Gastrocnemius medialis (tissue), 4 donors: ENCODE measurements at regions of chr15 and their contacts with region 1.

Region 1: DNA sequence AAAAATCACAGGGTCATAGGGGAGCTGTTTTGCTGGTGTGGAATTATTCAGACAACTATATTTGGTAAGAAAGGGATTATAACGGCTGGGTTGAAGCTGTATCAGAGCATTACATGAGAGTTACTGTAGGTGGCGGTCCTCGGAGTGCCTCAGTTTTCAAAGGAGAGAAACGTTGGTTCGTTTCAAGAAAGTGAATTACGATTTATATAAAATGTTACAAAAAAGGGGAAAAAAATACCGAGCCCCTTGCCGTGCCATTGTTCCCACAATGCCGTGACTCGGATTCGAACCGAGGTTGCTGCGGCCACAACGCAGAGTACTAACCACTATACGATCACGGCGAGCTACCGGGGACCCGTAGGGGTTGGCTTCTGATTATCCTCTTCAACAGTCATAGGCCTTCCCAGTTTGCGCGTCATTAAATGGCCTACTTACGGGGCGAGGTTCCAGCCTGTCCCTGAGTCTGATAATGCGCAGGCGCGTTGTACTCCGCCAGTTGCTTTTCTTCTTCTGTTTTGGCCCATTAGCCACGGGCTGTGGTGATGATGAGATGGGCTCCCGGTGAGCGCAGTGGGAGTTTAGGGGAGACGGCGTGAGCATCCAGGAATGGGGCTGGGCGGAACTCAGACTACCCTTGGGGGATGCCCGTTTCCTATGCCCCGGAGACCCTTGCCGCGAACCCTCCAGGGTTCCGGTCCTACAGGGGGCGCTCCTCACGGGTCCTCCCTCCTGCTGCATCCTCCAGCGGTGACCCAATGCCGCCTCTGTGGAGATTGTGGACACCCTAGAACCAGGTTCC is 10.8 kb upstream of the SHF start:
- DNase-seq: peak; percentile 92 to 96
- ATAC-seq: peak; percentile 80 to 82
- H3K4me3 ChIP-seq: peak overlapping the region; percentile 74 to 99 (median 93)
- H3K27ac ChIP-seq: peak overlapping the region; percentile 95 to 100 (median 99)
- H3K4me1 ChIP-seq: peaks cover 0 to 3% of the 10 kb centered on the region in 2 donors
- H3K27me3 ChIP-seq: no peaks in the 10 kb centered on the region
- CTCF ChIP-seq: peak; percentile 62 to 70 (median 64)
- POLR2A ChIP-seq: peak; percentile 85 to 87

Region 2: DNA sequence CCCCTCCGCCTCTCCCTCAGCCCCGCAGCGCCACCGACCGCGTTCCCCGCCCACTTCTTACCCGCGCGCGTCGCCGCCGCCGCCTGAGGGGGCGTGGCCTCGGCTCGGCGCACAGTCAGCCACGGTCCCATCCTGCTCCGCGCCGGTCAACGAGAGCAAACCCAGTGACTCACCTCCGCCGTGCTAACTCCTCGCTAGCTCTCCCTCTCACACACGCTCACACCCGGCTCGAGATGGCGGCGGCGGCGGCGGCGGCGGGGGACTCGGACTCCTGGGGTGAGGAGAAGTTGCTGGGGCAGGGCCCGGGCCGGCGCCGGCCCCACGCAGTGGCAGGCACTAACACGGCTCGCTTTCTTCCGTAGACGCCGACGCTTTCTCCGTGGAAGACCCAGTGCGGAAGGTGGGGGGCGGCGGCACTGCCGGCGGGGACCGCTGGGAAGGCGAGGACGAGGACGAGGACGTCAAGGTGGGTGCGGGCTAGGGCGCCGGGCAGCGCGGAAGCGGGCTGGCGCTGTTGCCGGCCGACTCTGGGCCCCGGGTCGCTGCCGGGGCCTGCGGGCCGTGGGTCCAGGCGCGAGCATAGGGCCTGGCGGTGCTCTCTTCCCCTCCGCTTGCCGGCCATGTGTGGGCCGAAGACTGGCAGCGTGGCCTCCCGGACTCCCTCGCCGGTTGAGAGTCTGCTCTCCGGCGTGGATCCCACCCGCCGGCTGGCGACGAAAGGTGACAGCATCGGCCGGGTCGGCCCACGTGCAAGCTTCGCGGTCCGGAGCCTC is 661.4 kb before region 1 on chr15 and contains the start of gene EIF3J:
- in situ Hi-C with region 1: no loop called
- intact Hi-C with region 1: loop called (anchors 5 kb)
- DNase-seq: peak; percentile 94 to 96
- ATAC-seq: peak; percentile 88 to 90
- H3K4me3 ChIP-seq: peak within 1 kb of the TSS; percentile 67 to 99 (median 89)
- H3K27ac ChIP-seq: peak within 1 kb of the TSS; percentile 90 to 99 (median 94)
- H3K4me1 ChIP-seq: peaks cover 38 to 48% of the 10 kb centered on the region in 2 donors
- H3K27me3 ChIP-seq: no peaks in the 10 kb centered on the region
- CTCF ChIP-seq: no peak
- POLR2A ChIP-seq: peak; percentile 84 to 97
- total RNA-seq, gene EIF3J: 79.2 to 122 (median 103) TPM

Region 3: GRCh38 chr15:45166834-45167630 is 31.5 kb before region 1 on chr15:
- in situ Hi-C with region 1: no loop called
- intact Hi-C with region 1: loop called (anchors 1 kb)
- DNase-seq: peak; percentile 64 to 78
- ATAC-seq: peak; percentile 78 to 82
- H3K4me3 ChIP-seq: peak overlapping the region; percentile 66 to 77 (median 75)
- H3K27ac ChIP-seq: peak overlapping the region; percentile 84 to 92 (median 89)
- H3K4me1 ChIP-seq: peaks cover 0 to 4% of the 10 kb centered on the region in 2 donors
- H3K27me3 ChIP-seq: no peaks in the 10 kb centered on the region
- CTCF ChIP-seq: peak; percentile 26 to 59 (median 51)
- POLR2A ChIP-seq: peak; percentile 14 to 20

Region 4: GRCh38 chr15:45333550-45333949 is 135.0 kb after region 1 on chr15:
- in situ Hi-C with region 1: no loop called
- intact Hi-C with region 1: no loop called
- DNase-seq: peak; percentile 6 to 29
- ATAC-seq: peak; percentile 45 to 55
- H3K4me3 ChIP-seq: no peak overlapping the region
- H3K27ac ChIP-seq: no peak overlapping the region
- H3K4me1 ChIP-seq: no peaks in the 10 kb centered on the region
- H3K27me3 ChIP-seq: no peaks in the 10 kb centered on the region
- CTCF ChIP-seq: no peak
- POLR2A ChIP-seq: no peak

Region 5: DNA sequence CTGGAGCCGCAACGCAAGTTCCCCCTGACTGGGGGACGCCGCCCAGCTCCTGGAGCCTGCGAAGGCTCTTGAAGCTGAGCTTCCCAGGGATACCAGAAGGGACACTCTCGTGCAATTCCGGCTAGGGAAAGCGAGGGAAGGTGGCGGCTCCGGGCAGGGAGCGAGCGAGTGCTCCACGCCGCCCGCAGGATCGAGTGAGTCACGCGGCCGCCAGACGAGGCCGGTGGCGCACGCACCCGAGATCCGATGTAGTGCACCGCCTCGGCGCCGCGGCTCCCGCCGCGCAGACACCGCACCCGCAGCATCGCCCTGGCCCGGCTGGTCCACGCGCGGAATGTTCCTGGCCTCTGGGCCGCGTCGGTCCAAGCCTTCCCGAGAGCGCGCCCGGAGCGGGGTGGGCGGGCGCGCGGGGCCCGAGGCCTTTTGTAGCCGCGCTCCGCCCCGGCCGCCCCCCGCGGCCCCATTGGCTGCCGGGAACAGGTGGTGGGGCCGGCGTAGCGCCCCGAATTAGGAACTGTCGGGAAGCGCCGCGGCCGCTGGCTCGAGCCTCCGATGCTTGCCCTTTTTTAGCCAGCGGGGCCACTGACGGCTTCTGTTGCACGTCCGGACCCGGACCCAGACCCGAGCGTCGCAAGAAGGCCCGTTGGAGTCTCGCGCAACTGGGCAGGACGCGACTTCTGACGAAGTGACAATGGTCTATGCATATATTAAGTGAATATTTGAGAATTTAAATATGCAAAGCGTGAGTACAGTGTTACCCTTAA is 179.8 kb after region 1 on chr15 and contains the start of gene GATM:
- in situ Hi-C with region 1: loop called in 1 of 4 experiments (anchors 10 kb)
- intact Hi-C with region 1: loop called (anchors 1 kb)
- DNase-seq: peak; percentile 71
- ATAC-seq: peak; percentile 78 to 94
- H3K4me3 ChIP-seq: peak within 1 kb of the TSS; percentile 60 to 86 (median 71)
- H3K27ac ChIP-seq: peak within 1 kb of the TSS; percentile 78 to 88 (median 82)
- H3K4me1 ChIP-seq: peaks cover 25 to 31% of the 10 kb centered on the region in 2 donors
- H3K27me3 ChIP-seq: no peaks in the 10 kb centered on the region
- CTCF ChIP-seq: peak; percentile 22 to 59 (median 51)
- POLR2A ChIP-seq: peak; percentile 84 to 92
- total RNA-seq, gene GATM: 18.0 to 92.1 (median 35.3) TPM

Region 6: GRCh38 chr15:45457641-45458433 is 259.3 kb after region 1 on chr15:
- in situ Hi-C with region 1: no loop called
- intact Hi-C with region 1: loop called (anchors 2 kb)
- DNase-seq: peak; percentile 30 to 33
- ATAC-seq: peak; percentile 76 to 91
- H3K4me3 ChIP-seq: peak overlapping the region; percentile 50 to 75 (median 56)
- H3K27ac ChIP-seq: peak overlapping the region; percentile 74 to 82 (median 75)
- H3K4me1 ChIP-seq: no peaks in the 10 kb centered on the region
- H3K27me3 ChIP-seq: no peaks in the 10 kb centered on the region
- CTCF ChIP-seq: peak; percentile 42 to 85 (median 77)
- POLR2A ChIP-seq: no peak

Region 7: DNA sequence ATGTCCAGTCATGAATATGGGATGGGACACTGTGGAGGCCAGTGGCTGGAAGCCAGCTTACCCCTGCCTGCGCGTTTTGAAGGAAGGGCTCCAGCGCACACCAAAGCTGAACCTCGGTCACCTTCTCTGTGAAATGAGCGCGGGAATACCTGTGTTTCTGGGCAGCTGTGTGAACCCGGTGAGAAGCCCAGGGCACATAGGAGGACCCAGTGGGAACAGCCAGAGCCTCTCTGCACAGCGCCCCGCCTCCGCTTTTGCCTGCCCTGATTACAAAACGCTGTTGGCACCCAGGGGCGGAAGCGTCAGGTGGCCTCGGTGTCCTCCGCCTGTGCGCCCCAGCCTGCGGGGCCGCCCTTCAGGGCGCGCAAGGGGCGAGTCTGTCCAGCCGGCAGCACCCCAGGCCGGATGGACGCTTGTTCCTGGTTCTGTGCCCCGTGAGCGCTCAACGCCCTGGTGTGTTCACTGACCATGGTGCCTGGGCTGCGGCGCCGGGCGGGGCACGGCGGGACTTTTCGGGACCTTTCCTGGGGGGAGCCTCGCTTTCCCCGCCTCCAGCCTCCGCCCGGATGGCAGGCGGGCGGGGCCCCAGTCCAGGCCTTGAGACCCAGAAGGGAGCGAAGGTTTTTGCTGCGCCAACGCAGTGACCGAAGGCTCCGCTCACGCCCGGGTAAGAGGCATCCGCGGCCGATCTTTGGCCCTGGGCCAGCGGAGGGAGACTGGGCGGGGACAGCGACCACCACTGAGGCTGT is 436.1 kb after region 1 on chr15 and contains the start of gene SQOR:
- in situ Hi-C with region 1: loop called in 2 of 4 experiments (anchors 25 kb)
- intact Hi-C with region 1: no loop called
- DNase-seq: peak; percentile 85 to 95
- ATAC-seq: peak; percentile 78 to 81
- H3K4me3 ChIP-seq: peak within 1 kb of the TSS; percentile 84 to 95 (median 88)
- H3K27ac ChIP-seq: peak within 1 kb of the TSS; percentile 98 to 99 (median 98)
- H3K4me1 ChIP-seq: peaks cover 34 to 35% of the 10 kb centered on the region in 2 donors
- H3K27me3 ChIP-seq: no peaks in the 10 kb centered on the region
- CTCF ChIP-seq: no peak
- POLR2A ChIP-seq: peak; percentile 91 to 93
- total RNA-seq, gene SQOR: 140 to 194 (median 164) TPM